ENCODE measurements at regions of chr16 and their contacts with region 1.

Region 1: GRCh38 chr16:10988164-10988803 is 43.9 kb downstream of the CLEC16A start:
- DNase-seq: peak; percentile 89
- H3K4me3 Mint-ChIP-seq: peak overlapping the region; percentile 66
- H3K27ac Mint-ChIP-seq: peak overlapping the region; percentile 92
- H3K4me1 Mint-ChIP-seq: peaks cover 79% of the 10 kb centered on the region
- H3K27me3 Mint-ChIP-seq: no peaks in the 10 kb centered on the region

Region 2: GRCh38 chr16:11025120-11025531 is 36.8 kb after region 1 on chr16:
- intact Hi-C with region 1: loop called (anchors 1 kb)
- DNase-seq: no peak
- H3K4me3 Mint-ChIP-seq: no peak overlapping the region
- H3K27ac Mint-ChIP-seq: peak overlapping the region; percentile 75
- H3K4me1 Mint-ChIP-seq: peaks cover 17% of the 10 kb centered on the region
- H3K27me3 Mint-ChIP-seq: no peaks in the 10 kb centered on the region

Region 3: DNA sequence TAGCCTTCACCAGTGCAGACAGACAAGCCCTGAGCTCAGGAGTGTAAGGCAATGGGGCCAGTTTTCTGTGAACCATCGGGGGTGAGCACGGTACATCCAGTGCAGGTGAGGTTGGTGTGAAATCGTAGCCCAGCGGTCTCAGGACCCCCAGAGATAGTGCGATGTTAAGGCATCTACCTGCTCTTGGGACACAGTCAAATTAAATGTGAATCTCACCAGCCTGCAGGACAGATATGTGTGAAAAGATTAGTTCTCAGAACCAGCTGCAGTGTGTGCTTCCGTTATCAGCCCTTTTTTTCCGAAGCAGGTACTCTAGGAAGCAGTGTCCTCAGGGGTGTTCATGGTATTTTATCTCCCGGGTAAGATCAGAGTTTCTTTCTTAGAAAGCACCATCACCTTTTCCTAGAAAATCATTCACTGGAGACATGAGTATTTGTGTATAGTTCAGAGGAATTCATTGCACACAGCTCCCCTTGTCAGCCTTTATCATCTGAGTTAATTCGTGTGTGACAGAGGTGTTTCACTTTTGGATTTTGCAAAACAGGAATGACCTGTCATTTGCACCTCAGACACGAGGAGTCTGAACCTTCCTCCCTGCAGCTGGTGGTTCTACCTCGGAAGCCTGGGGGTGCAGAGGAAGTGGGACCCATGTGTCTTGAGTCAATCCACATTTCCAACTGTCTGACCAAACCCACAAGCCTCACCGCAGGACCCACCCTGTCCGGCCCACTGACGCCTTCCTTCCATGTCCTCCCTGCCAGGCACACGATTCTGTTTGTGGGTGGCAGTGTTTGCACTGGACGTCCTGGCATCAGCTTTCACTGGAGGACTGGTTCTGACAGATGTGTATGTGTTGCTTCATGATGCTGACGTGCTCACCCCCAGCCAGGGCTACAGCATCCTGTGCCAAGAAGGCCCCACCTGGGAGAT is 63.9 kb after region 1 on chr16:
- intact Hi-C with region 1: loop called (anchors 1 kb)
- DNase-seq: peak; percentile 93
- H3K4me3 Mint-ChIP-seq: peak overlapping the region; percentile 46
- H3K27ac Mint-ChIP-seq: peak overlapping the region; percentile 89
- H3K4me1 Mint-ChIP-seq: peaks cover 77% of the 10 kb centered on the region
- H3K27me3 Mint-ChIP-seq: no peaks in the 10 kb centered on the region

Region 4: GRCh38 chr16:11105038-11105903 is 117.0 kb after region 1 on chr16:
- intact Hi-C with region 1: loop called (anchors 1 kb)
- DNase-seq: peak; percentile 84
- H3K4me3 Mint-ChIP-seq: peak overlapping the region; percentile 73
- H3K27ac Mint-ChIP-seq: peak overlapping the region; percentile 92
- H3K4me1 Mint-ChIP-seq: peaks cover 65% of the 10 kb centered on the region
- H3K27me3 Mint-ChIP-seq: no peaks in the 10 kb centered on the region

Region 5: GRCh38 chr16:11232852-11233726 is 244.8 kb after region 1 on chr16:
- intact Hi-C with region 1: loop called (anchors 1 kb)
- DNase-seq: peak; percentile 98
- H3K4me3 Mint-ChIP-seq: peak overlapping the region; percentile 78
- H3K27ac Mint-ChIP-seq: peak overlapping the region; percentile 98
- H3K4me1 Mint-ChIP-seq: peaks cover 74% of the 10 kb centered on the region
- H3K27me3 Mint-ChIP-seq: no peaks in the 10 kb centered on the region